Astrocyte of the cerebellum (primary cell): ENCODE measurements at regions of chr3 and their contacts with region 1.

Region 1: GRCh38 chr3:128584412-128585020 is 66.1 kb downstream of the RPN1 start:
- DNase-seq: no peak
- H3K4me3 ChIP-seq: no peak overlapping the region
- CTCF ChIP-seq: peak; percentile 71

Region 2: DNA sequence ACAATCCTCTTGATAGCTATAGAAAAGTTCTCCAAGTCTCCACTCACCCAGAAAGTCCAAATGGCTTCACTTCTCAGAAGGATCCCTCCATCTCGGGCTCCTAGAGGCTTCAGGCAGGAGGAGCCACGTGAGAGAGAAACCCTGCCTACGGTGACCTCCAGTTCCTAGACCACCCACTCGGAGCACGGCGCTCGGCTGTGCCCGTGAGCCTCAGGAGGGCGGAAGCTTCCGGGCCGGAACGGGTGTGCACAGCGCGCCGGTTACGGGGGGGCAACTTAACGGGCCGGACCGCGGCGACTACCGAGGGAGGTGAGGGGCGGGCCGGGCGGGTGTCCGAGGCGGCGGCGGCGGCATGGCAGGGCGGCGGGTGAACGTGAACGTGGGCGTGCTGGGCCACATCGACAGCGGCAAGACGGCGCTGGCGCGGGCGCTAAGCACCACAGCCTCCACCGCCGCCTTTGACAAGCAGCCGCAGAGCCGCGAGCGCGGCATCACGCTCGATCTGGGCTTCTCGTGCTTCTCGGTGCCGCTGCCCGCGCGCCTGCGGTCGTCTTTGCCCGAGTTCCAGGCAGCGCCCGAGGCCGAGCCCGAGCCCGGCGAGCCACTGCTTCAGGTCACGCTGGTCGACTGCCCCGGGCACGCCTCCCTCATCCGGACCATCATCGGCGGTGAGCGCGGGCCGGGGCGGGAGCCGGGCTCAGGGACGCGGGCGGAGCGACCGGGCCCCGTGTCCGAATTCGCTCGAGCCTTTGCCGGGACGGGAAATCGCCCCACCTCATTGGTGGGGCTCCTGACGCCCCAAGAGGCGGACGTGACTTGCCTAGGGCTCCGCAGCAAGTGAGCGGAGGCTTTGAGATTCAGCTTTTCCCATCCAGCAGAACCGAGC is 431.1 kb before region 1 on chr3 and contains the start of gene EEFSEC:
- in situ Hi-C with region 1: loop called (anchors 25 kb)
- DNase-seq: peak; percentile 22
- H3K4me3 ChIP-seq: peak within 1 kb of the TSS; percentile 81
- CTCF ChIP-seq: no peak